IMR-90 (cell line): ENCODE measurements at regions of chr16 and their contacts with region 1.

Region 1: GRCh38 chr16:82116535-82116934 is 53.5 kb downstream of the MPHOSPH6 start:
- DNase-seq: no peak
- ATAC-seq: peak; percentile 56; the same call in 1 of the 2 replicates
- H3K4me3 ChIP-seq: no peak overlapping the region
- H3K27ac ChIP-seq: peak overlapping the region; percentile 90; the same call in 1 of the 2 replicates
- H3K4me1 ChIP-seq: peaks cover 2% of the 10 kb centered on the region; the same call in 1 of the 2 replicates
- H3K27me3 ChIP-seq: no peaks in the 10 kb centered on the region
- CTCF ChIP-seq: no peak
- POLR2A ChIP-seq: no peak
- RAD21 ChIP-seq: no peak

Region 2: GRCh38 chr16:82074019-82074558 is 42.4 kb before region 1 on chr16:
- CTCF ChIA-PET with region 1: no interaction called
- POLR2A ChIA-PET with region 1: no interaction called
- dilution Hi-C with region 1: no loop called
- in situ Hi-C with region 1: no loop called
- intact Hi-C with region 1: loop called (anchors 2 kb)
- DNase-seq: no peak
- ATAC-seq: no peak
- H3K4me3 ChIP-seq: no peak overlapping the region
- H3K27ac ChIP-seq: no peak overlapping the region
- H3K4me1 ChIP-seq: peaks cover 11% of the 10 kb centered on the region
- H3K27me3 ChIP-seq: no peaks in the 10 kb centered on the region
- CTCF ChIP-seq: no peak
- POLR2A ChIP-seq: no peak
- RAD21 ChIP-seq: no peak